ENCODE measurements at regions of chr11 and their contacts with region 1.

Region 1: DNA sequence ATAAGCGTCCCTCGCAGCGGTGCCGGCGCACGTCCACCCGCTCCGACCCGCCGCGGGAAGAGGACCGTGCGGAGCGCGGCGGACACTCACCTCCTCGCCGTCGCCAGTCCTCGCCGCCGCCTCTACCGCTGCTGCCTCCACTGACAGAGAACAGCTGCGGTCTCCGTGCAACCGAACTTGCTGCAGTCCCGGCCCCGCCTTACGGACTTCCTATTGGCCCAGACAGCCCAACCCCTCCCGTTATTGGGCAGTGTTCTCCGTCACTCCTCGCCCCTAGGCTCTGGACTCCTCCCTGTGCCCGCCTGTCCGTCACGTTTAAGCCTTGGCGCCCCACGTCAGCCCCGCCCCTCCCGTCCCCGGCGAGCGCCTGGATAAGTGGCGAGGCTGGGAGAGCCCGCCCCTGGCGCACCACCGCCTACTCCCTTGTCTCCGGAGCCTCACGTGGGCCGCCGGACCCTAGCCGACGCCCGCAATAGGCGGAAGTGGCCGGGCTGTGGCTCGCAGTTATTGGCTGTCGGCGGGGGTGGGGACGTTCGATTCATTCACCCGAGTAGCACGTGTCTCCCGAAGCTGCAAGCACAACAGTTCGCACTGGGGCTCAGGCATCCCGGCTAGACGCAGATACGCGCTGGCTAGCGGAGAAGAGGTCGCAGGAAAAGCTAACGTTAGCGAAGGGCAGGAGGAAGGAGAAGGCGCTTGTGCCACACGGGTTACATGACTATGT is at the start of gene PC:
- H3K4me3 Mint-ChIP-seq: peak within 1 kb of the TSS; percentile 76
- H3K27ac Mint-ChIP-seq: peak within 1 kb of the TSS; percentile 80
- H3K4me1 Mint-ChIP-seq: peaks cover 53% of the 10 kb centered on the region
- H3K27me3 Mint-ChIP-seq: peaks cover 11% of the 10 kb centered on the region

Region 2: DNA sequence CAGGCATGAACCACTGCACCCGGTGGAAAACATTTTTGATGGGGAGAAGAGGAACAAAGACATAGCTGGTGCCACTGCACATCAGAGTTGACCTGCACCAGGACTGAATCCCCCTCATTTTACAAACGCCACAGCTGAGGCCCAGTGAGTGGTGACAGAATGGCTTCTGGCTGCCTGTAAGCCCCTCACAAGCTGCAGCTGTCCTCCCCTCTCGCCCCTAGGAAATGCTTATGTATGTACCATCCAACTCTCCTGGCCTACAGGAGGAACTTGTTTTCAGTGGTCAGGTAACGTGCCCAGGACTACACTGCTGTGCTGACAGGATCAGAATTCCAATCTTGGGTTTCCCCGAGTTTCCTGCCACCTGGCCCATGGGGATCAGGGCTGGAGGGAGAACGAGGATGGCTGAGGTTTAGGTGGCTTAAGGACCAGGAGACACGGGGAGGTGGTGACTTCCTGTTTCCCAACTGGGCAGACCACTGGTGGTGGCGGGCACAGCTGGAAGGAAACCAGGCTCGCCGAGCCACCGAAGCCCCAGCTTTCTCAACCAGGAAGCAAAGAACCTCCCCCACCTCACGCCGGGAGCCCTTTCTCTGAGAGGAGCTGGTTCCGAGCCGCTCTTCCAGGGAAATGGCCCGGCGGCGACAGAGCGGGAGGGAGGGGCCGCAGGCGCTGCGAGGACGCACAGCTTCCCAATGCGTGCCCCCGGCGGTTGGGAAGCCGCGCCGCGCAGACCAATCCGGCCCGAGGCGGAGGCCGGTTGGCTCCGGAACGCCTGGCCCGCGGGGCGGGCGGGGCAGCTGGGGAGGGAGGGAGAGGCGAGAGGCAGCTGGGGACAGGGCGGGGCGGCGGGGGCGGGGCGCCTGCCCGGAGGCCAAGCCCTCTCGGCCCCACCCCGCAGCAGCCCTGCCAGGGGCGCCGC is 102.6 kb before region 1 on chr11:
- intact Hi-C with region 1: loop called (anchors 5 kb)
- H3K4me3 Mint-ChIP-seq: peak overlapping the region; percentile 94
- H3K27ac Mint-ChIP-seq: peak overlapping the region; percentile 98
- H3K4me1 Mint-ChIP-seq: peaks cover 53% of the 10 kb centered on the region
- H3K27me3 Mint-ChIP-seq: no peaks in the 10 kb centered on the region

Region 3: GRCh38 chr11:66920978-66921784 is 37.2 kb before region 1 on chr11:
- intact Hi-C with region 1: loop called (anchors 1 kb)
- H3K4me3 Mint-ChIP-seq: peak overlapping the region; percentile 32
- H3K27ac Mint-ChIP-seq: peak overlapping the region; percentile 81
- H3K4me1 Mint-ChIP-seq: peaks cover 54% of the 10 kb centered on the region
- H3K27me3 Mint-ChIP-seq: peaks cover 2% of the 10 kb centered on the region

Region 4: GRCh38 chr11:66976048-66976467 is 17.7 kb after region 1 on chr11:
- intact Hi-C with region 1: no loop called
- H3K4me3 Mint-ChIP-seq: no peak overlapping the region
- H3K27ac Mint-ChIP-seq: no peak overlapping the region
- H3K4me1 Mint-ChIP-seq: peaks cover 5% of the 10 kb centered on the region
- H3K27me3 Mint-ChIP-seq: peaks cover 33% of the 10 kb centered on the region

Measured in dendritic cell treated with granulocyte-macrophage colony-stimulating factor and Interleukin-4, amounts not matched to agents 40 ng/mL and 50 ng/mL, for 4 days (primary cell).